ENCODE measurements at regions of chr14 and their contacts with region 1.

Region 1: DNA sequence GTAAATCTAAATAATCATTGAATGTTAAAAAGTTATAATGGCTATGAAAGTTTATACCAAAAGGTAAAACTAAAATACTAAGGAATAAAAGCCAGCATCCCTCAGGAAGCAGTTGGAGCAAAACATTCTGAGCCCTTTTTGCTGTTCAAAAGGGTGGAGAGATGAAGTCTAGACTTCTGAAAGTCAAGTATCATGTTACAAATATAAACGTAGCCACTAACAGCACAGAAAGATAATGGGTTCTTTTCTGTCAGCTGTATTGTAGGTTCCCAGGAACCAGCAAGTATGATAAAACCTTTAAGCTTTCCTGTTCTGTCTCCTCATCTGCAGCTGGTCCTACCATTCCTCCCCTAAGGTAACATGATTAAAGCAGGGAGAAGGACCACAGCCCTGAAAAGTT is 16.4 kb upstream of the PLD4 start:
- DNase-seq: no peak
- H3K4me3 ChIP-seq: no peak overlapping the region
- H3K27ac ChIP-seq: no peak overlapping the region
- H3K4me1 ChIP-seq: no peaks in the 10 kb centered on the region
- H3K27me3 ChIP-seq: peaks cover 0 to 7% of the 10 kb centered on the region in 2 donors
- CTCF ChIP-seq: no peak
- POLR2A ChIP-seq: no peak

Region 2: GRCh38 chr14:103770902-103771301 is 1137.4 kb before region 1 on chr14:
- intact Hi-C with region 1: loop called (anchors 10 kb)
- DNase-seq: no peak
- H3K4me3 ChIP-seq: no peak overlapping the region
- H3K27ac ChIP-seq: no peak overlapping the region
- H3K4me1 ChIP-seq: no peaks in the 10 kb centered on the region
- H3K27me3 ChIP-seq: no peaks in the 10 kb centered on the region
- CTCF ChIP-seq: no peak
- POLR2A ChIP-seq: no peak

Measured in breast epithelium (tissue), 4 donors.